HEK293 (cell line): ENCODE measurements at regions of chr4 and their contacts with region 1.

Region 1: DNA sequence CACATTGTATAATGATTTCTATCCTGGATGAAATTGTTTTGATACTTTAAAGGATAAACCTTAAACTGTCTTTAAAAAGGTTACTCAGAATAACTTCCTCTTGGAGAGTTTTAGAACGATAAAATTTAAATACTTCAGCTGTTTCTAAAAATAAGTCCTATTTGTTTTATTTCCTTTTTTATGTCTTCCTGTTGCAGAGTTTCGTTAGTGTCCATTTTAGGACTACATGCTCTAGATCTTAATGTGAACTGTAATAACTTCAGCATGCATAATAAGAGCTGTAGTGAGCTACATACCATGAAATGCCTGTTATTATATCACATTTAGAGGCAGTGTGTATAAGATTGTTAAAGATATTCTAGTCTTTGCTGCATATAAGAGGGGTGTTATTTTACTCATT is 14.6 kb downstream of the ATP10D start:
- H3K4me3 ChIP-seq: no peak overlapping the region
- H3K27ac ChIP-seq: no peak overlapping the region
- H3K4me1 ChIP-seq: no peaks in the 10 kb centered on the region
- CTCF ChIP-seq: no peak

Region 2: GRCh38 chr4:47334652-47335051 is 165.0 kb before region 1 on chr4:
- CTCF ChIA-PET with region 1: no interaction called
- POLR2A ChIA-PET with region 1: no interaction called
- H3K4me3 ChIP-seq: no peak overlapping the region
- H3K27ac ChIP-seq: no peak overlapping the region
- H3K4me1 ChIP-seq: no peaks in the 10 kb centered on the region
- CTCF ChIP-seq: no peak

Region 3: GRCh38 chr4:47814618-47815295 is 315.1 kb after region 1 on chr4:
- CTCF ChIA-PET with region 1: no interaction called
- POLR2A ChIA-PET with region 1: no interaction called
- H3K4me3 ChIP-seq: no peak overlapping the region
- H3K27ac ChIP-seq: no peak overlapping the region
- H3K4me1 ChIP-seq: no peaks in the 10 kb centered on the region
- CTCF ChIP-seq: no peak

Region 4: DNA sequence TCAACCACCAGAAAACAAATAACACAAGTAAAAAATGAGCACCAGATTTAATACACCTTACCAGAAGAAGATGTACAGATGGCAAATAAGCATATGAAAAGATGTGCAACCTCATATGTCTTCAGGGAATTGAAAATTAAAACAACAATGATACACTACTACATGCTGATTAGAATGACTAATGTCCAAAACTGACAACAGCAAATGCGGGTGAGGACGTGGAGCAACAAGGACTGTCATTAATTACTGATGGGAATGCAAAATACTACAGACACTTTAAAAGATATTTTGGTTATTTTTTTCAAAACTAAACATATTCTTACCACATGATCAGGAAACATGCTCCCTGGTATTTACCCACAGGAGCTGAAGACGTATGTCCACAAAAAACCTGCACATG is 1140.1 kb after region 1 on chr4:
- CTCF ChIA-PET with region 1: interaction called, 12 read pairs
- POLR2A ChIA-PET with region 1: no interaction called
- H3K4me3 ChIP-seq: no peak overlapping the region
- H3K27ac ChIP-seq: no peak overlapping the region
- H3K4me1 ChIP-seq: no peaks in the 10 kb centered on the region
- CTCF ChIP-seq: no peak